Activated naive CD8-positive, alpha-beta T cell treated with anti-CD3 and anti-CD28 coated beads, Interleukin-2, amount 10 ng/mL, durations not matched to agents 7 days and 5 days (primary cell): ENCODE measurements at regions of chr22 and their contacts with region 1.

Region 1: GRCh38 chr22:50293441-50294318 is 13.8 kb downstream of the PLXNB2 start:
- DNase-seq: peak; percentile 64
- ATAC-seq: peak; percentile 58
- H3K4me3 Mint-ChIP-seq: peak overlapping the region; percentile 71
- H3K27ac Mint-ChIP-seq: peak overlapping the region; percentile 78
- H3K4me1 Mint-ChIP-seq: peaks cover 16% of the 10 kb centered on the region
- H3K27me3 Mint-ChIP-seq: peaks cover under 1% of the 10 kb centered on the region

Region 2: DNA sequence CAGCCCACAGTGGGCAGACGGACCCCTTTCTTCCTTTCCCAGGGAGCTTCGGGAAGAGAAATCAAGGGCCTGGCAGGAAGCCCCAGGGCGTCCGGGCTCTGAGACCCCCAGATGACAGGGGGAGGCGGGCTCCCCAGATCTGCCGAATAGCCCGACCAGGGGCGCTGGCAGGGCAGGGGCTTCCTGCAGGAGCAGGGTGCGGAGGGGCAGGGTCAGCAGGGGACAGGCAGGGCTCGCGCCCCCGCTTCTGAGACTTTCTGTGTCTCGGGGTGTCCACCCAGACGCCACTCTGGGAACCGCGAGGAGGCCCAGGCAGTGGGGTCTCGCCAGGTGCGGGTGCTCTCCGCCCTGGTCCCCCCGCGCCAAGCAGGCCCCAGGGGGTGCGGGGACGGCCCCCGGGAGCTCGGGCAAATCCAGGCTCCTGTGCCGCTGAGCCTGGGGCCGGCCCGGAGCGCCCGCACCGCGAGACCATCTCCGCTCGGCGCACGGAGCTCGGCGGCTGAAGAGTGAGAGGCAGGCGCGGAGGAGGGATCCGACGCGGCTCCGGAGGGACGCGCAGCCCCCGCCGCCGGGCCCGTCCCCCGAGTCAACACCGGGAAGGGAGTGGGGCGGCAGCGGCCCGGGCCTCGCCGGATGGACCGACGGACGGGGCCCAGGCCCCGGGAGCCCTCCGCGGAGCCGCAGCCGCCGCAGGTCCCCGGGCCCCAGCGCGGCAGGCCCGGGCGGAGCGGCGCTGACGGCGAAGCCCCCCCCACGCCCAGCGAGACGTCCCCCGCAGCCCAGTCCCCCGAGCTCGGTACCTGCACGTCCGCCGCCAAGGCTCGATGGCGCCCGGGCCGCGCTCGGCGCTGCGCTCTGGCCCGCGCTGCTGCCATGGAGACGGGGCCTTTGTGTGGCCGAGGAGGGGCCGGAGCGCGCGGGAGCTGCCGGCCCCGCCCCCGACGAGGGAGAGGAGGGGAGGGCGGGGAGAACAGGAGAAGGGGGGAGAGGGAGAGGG is 13.4 kb after region 1 on chr22 and contains the start of gene PLXNB2:
- POLR2A ChIA-PET with region 1: interaction called, 51 read pairs
- DNase-seq: peak; percentile 71
- ATAC-seq: peak; percentile 50
- H3K4me3 Mint-ChIP-seq: peak within 1 kb of the TSS; percentile 47
- H3K27ac Mint-ChIP-seq: no peak within 1 kb of the TSS
- H3K4me1 Mint-ChIP-seq: peaks cover 10% of the 10 kb centered on the region
- H3K27me3 Mint-ChIP-seq: peaks cover 10% of the 10 kb centered on the region
- total RNA-seq, gene PLXNB2: 43.0 to 45.8 TPM

Region 3: DNA sequence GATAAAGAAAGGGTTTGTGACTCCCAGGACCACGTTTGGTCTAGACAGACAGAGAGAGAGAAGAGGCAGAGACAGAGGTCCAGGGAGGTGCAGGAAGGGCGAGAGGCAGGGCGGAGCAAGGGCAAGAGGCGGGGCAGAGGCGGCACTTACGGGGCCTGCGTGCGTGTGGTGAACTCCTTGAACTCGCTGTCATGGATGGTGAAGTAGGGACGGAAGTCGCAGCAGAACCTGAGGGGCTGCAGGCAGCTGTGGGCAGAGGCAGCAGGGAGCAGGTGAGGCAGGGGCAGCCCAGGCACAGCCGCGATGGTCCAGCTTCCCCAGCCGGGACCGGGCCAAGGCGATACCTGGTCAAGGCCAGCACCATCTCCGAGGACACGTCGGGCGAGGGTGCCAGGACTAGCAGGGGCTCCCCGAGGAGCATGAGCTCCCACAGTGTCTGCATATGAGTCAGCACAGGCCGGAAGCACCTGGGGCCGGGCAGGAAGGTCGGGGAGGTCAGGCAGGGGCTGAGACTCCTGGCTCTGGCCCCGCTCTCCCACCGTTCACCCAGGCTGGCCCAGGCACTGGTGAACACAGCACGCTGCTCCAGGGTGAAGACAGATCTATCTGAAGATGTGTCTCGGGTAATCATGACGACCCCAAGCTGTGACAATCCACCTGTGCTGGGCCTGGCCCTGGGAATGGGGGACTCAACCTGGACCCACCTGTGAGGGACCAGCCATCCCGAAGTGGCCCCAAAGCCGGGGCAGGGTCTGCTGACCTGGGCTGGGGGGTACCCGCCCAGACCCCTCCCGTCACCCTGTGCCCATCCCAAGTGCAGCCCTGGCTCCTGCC is 21.0 kb after region 1 on chr22:
- POLR2A ChIA-PET with region 1: interaction called, 21 read pairs
- DNase-seq: peak; percentile 83
- ATAC-seq: peak; percentile 94
- H3K4me3 Mint-ChIP-seq: peak overlapping the region; percentile 88
- H3K27ac Mint-ChIP-seq: peak overlapping the region; percentile 92
- H3K4me1 Mint-ChIP-seq: peaks cover 11% of the 10 kb centered on the region
- H3K27me3 Mint-ChIP-seq: no peaks in the 10 kb centered on the region